PC-9 (cell line): ENCODE measurements at regions of chr1 and their contacts with region 1.

Region 1: DNA sequence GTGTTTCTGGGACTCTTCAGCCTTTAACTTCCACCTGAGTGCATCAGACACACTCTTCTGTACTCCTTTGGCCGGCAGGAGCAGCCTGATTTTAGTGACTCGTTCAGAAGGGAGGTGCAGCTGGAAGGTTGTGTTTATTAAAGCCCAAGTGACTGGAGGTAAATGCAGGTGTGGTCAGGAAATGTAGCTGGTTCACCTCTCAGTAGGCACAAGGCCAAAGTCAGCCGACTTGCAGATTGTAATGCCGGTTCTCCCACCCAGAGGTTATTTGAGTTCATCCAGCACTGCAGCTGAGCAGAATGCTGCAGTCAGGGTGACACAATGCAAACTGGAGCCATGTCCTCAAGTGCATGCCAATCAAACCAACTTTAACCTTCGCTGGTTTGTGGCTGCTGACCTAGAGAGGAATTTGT is 91.5 kb downstream of the SPATA46 start:
- DNase-seq: peak; percentile 86 to 97
- H3K4me3 ChIP-seq: no peak overlapping the region
- H3K27ac ChIP-seq: peak overlapping the region; percentile 47
- H3K4me1 ChIP-seq: peaks cover 35% of the 10 kb centered on the region
- H3K27me3 ChIP-seq: no peaks in the 10 kb centered on the region
- CTCF ChIP-seq: no peak; the same call in 1 of the 2 replicates

Region 2: DNA sequence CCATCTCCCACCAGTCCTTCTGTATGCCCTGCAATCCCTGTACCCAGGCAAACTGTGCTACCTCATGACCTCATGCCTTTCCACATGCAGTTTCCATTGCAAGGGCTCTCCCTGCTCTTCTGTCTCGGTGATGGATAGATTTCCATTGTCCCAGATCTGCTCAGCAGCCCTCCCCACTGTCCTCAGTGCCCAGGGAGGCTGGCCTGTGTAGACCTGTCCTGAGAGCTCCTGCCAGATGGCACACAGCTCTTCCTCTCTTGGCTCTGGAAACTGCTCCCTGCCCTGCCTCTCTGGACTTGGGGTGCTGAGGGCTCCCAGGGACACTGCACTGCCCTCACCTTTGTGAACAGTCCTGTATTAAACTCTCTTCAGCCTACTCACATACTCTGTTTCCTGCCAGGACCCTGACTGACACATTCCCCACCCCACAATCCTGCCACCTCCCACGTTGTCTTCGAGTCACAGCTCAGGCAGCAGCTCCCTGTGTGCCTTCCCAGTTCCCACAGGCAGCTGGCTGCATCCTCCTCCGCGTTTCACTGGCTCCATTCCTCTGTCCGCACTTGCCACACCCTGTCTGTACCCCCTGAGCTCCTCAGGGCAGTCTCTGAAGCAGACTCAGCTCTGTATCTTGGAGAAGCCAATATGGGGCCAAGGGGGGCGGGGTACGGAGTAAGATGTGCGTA is 34.5 kb after region 1 on chr1:
- CTCF ChIA-PET with region 1: no interaction called
- POLR2A ChIA-PET with region 1: no interaction called
- intact Hi-C with region 1: no loop called
- DNase-seq: no peak
- H3K4me3 ChIP-seq: no peak overlapping the region
- H3K27ac ChIP-seq: no peak overlapping the region
- H3K4me1 ChIP-seq: no peaks in the 10 kb centered on the region
- H3K27me3 ChIP-seq: no peaks in the 10 kb centered on the region
- CTCF ChIP-seq: no peak

Region 3: DNA sequence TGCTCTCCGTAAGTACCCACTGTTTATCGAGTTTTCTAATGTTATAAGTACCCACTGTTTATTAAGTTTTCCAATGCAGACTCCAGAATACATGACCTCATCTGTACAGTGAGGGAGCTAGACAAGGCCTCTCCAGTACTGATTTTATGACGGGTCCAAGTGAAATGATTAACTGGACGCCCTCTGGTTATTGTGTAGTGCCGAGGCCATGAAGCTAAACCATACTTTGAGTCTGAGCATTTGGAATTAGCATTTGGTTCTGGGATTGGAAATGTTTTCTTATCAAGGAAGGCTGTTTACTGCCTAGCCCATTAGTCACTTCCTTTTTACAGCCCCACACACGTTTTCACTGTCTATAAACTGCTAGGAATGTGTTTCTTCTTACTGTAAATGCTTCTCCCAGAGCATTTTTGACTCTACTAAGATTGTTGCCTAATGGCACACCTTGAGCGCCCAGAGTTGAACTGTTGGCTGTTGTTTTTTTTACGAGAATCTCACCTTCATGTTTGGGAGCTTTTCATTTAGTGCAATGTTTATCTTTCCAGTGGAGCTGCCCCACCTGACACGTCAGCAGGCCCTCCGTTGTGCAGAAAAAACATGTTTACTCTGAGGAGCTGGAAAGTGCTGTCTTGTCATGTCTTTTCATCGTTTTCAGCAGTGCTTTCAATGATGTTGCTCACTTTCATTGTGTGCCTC is 64.6 kb after region 1 on chr1:
- CTCF ChIA-PET with region 1: no interaction called
- POLR2A ChIA-PET with region 1: no interaction called
- intact Hi-C with region 1: loop called (anchors 1 kb)
- DNase-seq: peak; percentile 43 to 95
- H3K4me3 ChIP-seq: peak overlapping the region; percentile 17; the same call in 1 of the 2 replicates
- H3K27ac ChIP-seq: peak overlapping the region; percentile 79
- H3K4me1 ChIP-seq: peaks cover 48% of the 10 kb centered on the region
- H3K27me3 ChIP-seq: no peaks in the 10 kb centered on the region
- CTCF ChIP-seq: no peak

Region 4: DNA sequence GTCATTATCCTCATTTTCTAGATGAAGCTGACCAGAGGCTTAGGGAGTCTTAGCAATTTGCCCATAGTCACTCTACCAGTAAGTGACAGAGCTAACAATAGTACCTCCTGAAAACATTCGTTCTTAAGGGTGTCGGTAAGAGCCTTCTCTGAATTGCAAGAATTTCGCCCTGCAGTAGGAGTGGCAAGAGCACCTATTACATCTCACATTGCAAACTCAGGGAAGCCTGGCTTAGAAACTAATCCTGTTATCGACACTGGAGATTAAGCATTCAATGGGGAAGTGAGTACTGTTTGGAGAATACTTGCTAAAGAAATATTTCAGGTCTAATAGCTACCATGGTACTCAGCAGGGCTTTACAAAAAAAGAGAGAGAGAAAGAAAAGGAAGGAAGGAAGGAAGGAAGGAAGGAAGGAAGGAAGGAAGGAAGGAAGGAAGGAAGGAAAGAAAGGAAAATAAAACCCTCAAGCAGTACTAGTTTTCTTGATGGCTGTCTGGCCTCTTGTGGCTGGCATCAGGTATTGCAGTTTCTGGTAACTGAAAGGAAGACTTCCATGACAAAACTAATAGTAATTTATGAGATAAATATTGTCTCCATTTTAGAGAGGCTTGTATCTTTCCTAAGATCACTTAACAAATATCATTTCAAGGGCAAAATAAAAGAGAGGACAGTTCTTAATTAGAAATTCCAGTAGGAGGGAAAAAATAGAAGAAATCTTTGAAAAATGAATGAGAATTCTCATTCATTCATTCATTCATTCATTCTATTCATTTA is 106.8 kb after region 1 on chr1:
- CTCF ChIA-PET with region 1: no interaction called
- POLR2A ChIA-PET with region 1: no interaction called
- intact Hi-C with region 1: loop called (anchors 2 kb)
- DNase-seq: peak in 1 of 2 experiments; percentile 21
- H3K4me3 ChIP-seq: no peak overlapping the region
- H3K27ac ChIP-seq: no peak overlapping the region
- H3K4me1 ChIP-seq: no peaks in the 10 kb centered on the region
- H3K27me3 ChIP-seq: no peaks in the 10 kb centered on the region
- CTCF ChIP-seq: peak; percentile 95

Region 5: GRCh38 chr1:162561037-162561616 is 276.0 kb after region 1 on chr1:
- CTCF ChIA-PET with region 1: no interaction called
- POLR2A ChIA-PET with region 1: interaction called, 40 read pairs
- intact Hi-C with region 1: no loop called
- DNase-seq: peak; percentile 87 to 98
- H3K4me3 ChIP-seq: peak overlapping the region; percentile 70
- H3K27ac ChIP-seq: peak overlapping the region; percentile 54
- H3K4me1 ChIP-seq: peaks cover 17% of the 10 kb centered on the region
- H3K27me3 ChIP-seq: no peaks in the 10 kb centered on the region
- CTCF ChIP-seq: no peak

Region 6: DNA sequence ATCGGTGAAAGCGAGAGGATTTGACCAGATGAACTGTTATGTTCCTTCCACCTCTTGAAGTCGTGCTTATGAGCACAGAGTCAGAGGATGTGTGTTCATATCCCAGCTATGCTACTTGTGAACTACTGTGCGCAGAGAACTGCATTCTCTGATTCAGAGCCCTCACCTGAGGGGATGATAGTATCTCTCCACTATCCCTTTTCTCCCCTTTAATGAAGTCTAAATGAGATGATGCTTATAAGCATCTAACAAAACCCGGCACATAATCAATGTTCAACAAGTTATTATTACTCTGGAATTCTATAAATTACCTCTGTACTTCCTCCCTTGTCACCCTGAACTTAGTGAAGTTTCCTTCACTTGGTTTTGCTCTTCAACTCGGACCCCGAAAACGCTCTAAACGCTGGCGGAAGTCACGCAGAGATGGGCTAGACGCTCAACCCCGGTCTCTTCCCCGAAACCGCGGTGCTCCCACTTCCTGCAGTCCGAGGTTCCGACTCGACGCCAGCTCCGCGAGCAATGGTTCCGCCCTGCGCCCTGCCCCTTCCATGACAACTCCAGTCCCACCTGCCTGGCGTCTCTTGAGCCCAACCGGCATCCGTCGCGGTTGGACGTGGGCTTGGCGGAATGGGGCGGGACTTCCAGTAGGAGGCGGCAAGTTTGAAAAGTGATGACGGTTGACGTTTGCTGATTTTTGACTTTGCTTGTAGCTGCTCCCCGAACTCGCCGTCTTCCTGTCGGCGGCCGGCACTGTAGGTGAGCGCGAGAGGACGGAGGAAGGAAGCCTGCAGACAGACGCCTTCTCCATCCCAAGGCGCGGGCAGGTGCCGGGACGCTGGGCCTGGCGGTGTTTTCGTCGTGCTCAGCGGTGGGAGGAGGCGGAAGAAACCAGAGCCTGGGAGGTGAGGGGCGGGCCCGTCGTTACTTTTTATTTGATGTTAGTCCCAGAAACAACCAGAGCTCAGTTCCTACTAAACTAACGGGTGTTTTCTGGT is 1036.5 kb after region 1 on chr1 and contains the start of gene NUF2:
- CTCF ChIA-PET with region 1: no interaction called
- POLR2A ChIA-PET with region 1: no interaction called
- intact Hi-C with region 1: loop called (anchors 5 kb)
- DNase-seq: peak; percentile 94 to 97
- H3K4me3 ChIP-seq: peak within 1 kb of the TSS; percentile 96
- H3K27ac ChIP-seq: peak within 1 kb of the TSS; percentile 79
- H3K4me1 ChIP-seq: peaks cover 25% of the 10 kb centered on the region
- H3K27me3 ChIP-seq: no peaks in the 10 kb centered on the region
- CTCF ChIP-seq: 0 out of 2 replicates have a peak, but pooled peaks have one; percentile 16
- total RNA-seq, gene NUF2: 21.6 and 33.3 TPM in 2 replicates